ENCODE measurements at regions of chr17 and their contacts with region 1.

Region 1: DNA sequence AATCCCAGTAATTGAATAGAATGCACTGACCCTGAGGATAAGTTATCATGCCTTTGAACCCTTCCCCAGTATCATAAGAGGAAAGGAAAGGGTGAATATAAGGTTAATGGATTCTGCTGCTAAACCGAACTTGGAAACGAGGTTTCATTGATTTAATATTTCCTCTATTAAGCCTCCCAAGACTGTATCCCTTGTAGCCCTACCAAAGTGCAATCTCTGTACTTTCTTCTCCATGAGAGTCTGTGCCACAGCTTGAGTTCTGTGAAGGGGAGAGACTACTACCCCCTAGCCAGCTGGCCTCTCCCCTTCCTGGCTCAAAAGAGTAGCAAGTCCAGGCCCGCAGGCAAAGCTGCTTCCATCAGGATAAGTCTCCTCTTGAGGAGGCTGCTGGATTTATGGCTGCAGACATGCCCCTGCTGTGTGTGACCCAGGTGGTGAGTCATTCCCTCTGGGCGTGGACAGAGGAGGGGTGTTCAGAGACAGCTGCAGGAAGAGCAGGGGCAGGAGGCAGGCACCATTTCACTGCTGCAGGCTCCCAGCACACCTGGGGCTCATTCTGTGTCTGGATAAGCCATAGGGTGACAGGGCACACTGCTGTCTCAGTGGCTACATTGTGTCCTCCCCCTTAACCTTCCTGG is 58.4 kb downstream of the TOM1L2 start:
- DNase-seq: peak; percentile 81 to 84
- ATAC-seq: peak; percentile 84
- H3K4me3 ChIP-seq: no peak overlapping the region
- H3K27ac ChIP-seq: no peak overlapping the region
- H3K4me1 ChIP-seq: no peaks in the 10 kb centered on the region
- H3K27me3 ChIP-seq: no peaks in the 10 kb centered on the region

Region 2: DNA sequence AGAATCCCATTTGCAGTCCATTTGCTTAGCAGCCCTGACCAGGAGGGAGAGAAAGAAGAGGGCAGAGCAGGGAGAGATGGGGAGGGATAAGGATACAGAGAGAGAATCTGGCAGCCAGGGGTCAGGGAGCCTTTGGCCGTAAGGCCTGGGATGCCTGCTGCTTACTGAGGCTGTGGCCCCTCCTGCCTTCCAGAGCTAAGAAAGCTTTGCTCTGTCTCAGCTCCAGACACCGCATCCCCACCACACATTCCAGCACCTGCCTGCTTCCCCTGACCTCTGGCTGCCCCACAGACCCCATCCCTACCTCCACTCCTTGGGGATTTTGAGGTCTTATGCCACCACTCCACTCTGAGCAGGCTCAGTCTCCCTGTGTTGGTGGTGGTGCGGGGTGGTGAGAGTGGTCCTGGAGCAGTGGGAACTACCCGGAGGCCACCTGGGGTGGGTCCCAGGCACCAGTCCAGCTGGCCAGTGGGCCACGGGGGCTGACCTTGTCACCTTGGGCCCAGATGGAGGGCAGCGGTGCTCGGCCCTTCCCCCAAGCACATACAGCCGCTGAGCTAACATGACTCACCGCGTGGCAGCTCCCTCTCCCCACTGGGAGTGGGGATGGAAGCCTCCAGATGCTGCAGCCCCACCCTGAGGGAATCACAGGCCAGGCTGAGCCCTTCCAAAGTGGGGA is 174.3 kb before region 1 on chr17:
- intact Hi-C with region 1: no loop called
- DNase-seq: peak in 1 of 2 donors; percentile 75
- ATAC-seq: peak; percentile 51
- H3K4me3 ChIP-seq: no peak overlapping the region
- H3K27ac ChIP-seq: no peak overlapping the region
- H3K4me1 ChIP-seq: no peaks in the 10 kb centered on the region
- H3K27me3 ChIP-seq: no peaks in the 10 kb centered on the region

Region 3: GRCh38 chr17:17868641-17869522 is 44.9 kb before region 1 on chr17:
- intact Hi-C with region 1: loop called in 1 of 2 experiments (anchors 5 kb)
- DNase-seq: no peak
- ATAC-seq: peak; percentile 27
- H3K4me3 ChIP-seq: no peak overlapping the region
- H3K27ac ChIP-seq: no peak overlapping the region
- H3K4me1 ChIP-seq: no peaks in the 10 kb centered on the region
- H3K27me3 ChIP-seq: no peaks in the 10 kb centered on the region

Region 4: GRCh38 chr17:18055597-18055996 is 141.8 kb after region 1 on chr17:
- intact Hi-C with region 1: no loop called
- DNase-seq: no peak
- ATAC-seq: no peak
- H3K4me3 ChIP-seq: no peak overlapping the region
- H3K27ac ChIP-seq: no peak overlapping the region
- H3K4me1 ChIP-seq: no peaks in the 10 kb centered on the region
- H3K27me3 ChIP-seq: no peaks in the 10 kb centered on the region